CD4-positive, alpha-beta memory T cell (primary cell): ENCODE measurements at regions of chr1 and their contacts with region 1.

Region 1: GRCh38 chr1:1574721-1575537 is at the start of gene SSU72:
- DNase-seq: peak; percentile 91 to 95 (median 94)
- H3K4me3 ChIP-seq: peak within 1 kb of the TSS; percentile 97
- H3K4me3 Mint-ChIP-seq: peak within 1 kb of the TSS; percentile 96 to 99 (median 98)
- H3K27ac ChIP-seq: peak within 1 kb of the TSS; percentile 99
- H3K27ac Mint-ChIP-seq: peak within 1 kb of the TSS; percentile 97 to 100 (median 99)
- H3K4me1 ChIP-seq: peaks cover 43% of the 10 kb centered on the region
- H3K4me1 Mint-ChIP-seq: peaks cover 12 to 38% (median 25%) of the 10 kb centered on the region in 4 donors
- H3K27me3 ChIP-seq: no peaks in the 10 kb centered on the region
- H3K27me3 Mint-ChIP-seq: no peaks in the 10 kb centered on the region
- total RNA-seq, gene SSU72: 128 to 132 TPM

Region 2: GRCh38 chr1:993379-993995 is 581.4 kb before region 1 on chr1:
- CTCF ChIA-PET with region 1: no interaction called
- POLR2A ChIA-PET with region 1: no interaction called
- intact Hi-C with region 1: no loop called
- DNase-seq: no peak
- H3K4me3 ChIP-seq: no peak overlapping the region
- H3K4me3 Mint-ChIP-seq: no peak overlapping the region
- H3K27ac ChIP-seq: no peak overlapping the region
- H3K27ac Mint-ChIP-seq: no peak overlapping the region
- H3K4me1 ChIP-seq: peaks cover 4% of the 10 kb centered on the region
- H3K4me1 Mint-ChIP-seq: peaks cover 4 to 15% (median 5%) of the 10 kb centered on the region in 4 donors
- H3K27me3 ChIP-seq: peaks cover 14% of the 10 kb centered on the region
- H3K27me3 Mint-ChIP-seq: peaks cover 21 to 25% of the 10 kb centered on the region in 2 donors

Region 3: DNA sequence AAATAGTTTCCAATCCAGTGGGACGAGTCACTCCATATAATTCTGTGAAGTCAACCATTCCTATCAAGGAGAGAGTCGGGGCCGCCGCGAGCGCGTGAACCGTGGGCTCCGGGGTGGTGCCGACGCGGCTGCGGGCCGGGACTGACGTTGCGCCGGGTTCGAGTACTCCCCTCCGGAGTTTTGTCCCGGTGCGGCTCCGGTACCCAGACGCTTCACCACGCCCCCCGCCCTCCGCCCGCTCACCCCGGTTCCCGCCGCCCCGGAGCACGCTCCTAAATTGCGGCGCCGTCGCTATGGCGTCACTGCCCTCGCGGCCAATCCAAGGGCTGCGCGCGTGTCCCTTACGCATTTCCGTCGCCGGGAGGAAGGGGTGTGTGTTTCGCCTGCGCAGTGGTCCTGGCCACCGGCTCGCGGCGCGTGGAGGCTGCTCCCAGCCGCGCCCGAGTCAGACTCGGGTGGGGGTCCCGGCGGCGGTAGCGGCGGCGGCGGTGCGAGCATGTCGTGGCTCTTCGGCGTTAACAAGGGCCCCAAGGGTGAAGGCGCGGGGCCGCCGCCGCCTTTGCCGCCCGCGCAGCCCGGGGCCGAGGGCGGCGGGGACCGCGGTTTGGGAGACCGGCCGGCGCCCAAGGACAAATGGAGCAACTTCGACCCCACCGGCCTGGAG is 103.4 kb before region 1 on chr1 and contains the start of gene ATAD3B:
- CTCF ChIA-PET with region 1: no interaction called
- POLR2A ChIA-PET with region 1: no interaction called
- intact Hi-C with region 1: loop called (anchors 1 kb)
- DNase-seq: peak; percentile 87 to 92 (median 87)
- H3K4me3 ChIP-seq: peak within 1 kb of the TSS; percentile 54 to 83
- H3K4me3 Mint-ChIP-seq: peak within 1 kb of the TSS; percentile 84 to 97 (median 91)
- H3K27ac ChIP-seq: peak within 1 kb of the TSS; percentile 56
- H3K27ac Mint-ChIP-seq: peak within 1 kb of the TSS; percentile 77 to 99 (median 93)
- H3K4me1 ChIP-seq: peaks cover 24% of the 10 kb centered on the region
- H3K4me1 Mint-ChIP-seq: peaks cover 8 to 38% (median 19%) of the 10 kb centered on the region in 4 donors
- H3K27me3 ChIP-seq: no peaks in the 10 kb centered on the region
- H3K27me3 Mint-ChIP-seq: no peaks in the 10 kb centered on the region
- total RNA-seq, gene ATAD3B: 51.1 to 53.8 TPM

Region 4: DNA sequence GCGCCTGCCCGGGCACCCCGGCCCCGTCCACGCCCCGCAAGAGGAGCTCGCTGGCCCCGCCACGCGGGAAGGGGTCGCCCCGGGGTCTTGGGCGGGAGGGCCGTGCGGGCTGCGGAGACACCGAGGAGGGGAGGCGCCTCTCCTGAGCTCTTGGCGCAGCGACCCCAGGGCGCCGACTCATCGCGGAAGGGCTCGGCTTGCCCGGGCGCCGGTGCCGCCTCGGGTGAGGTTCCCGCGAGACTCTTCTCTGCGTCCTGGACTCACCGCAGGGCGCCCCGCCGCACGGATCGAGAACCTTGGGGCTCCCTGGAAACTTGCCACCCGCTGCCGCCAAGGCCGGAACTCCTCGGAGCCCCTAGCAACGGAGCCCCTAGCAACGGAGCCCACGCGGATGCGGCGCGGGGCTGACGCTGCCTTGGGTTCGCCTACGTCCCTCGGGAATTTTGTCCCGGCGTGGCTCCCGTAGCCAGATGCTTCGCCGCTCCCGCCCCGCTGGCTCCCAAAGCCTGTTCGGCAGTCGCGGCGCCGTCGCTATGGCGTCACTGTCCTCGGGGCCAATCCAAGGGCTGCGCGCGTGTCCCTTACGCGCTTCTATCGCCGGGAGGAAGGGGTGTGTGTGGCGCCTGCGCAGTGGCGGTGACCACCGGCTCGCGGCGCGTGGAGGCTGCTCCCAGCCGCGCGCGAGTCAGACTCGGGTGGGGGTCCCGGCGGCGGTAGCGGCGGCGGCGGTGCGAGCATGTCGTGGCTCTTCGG is 63.2 kb before region 1 on chr1 and contains the start of gene ATAD3A:
- CTCF ChIA-PET with region 1: no interaction called
- POLR2A ChIA-PET with region 1: no interaction called
- intact Hi-C with region 1: loop called (anchors 2 kb)
- DNase-seq: peak; percentile 94 to 95 (median 94)
- H3K4me3 ChIP-seq: peak within 1 kb of the TSS; percentile 73 to 91
- H3K4me3 Mint-ChIP-seq: peak within 1 kb of the TSS; percentile 90 to 96 (median 93)
- H3K27ac ChIP-seq: peak within 1 kb of the TSS; percentile 94
- H3K27ac Mint-ChIP-seq: peak within 1 kb of the TSS; percentile 91 to 98 (median 96)
- H3K4me1 ChIP-seq: peaks cover 6% of the 10 kb centered on the region
- H3K4me1 Mint-ChIP-seq: peaks cover 5 to 19% (median 11%) of the 10 kb centered on the region in 4 donors
- H3K27me3 ChIP-seq: no peaks in the 10 kb centered on the region
- H3K27me3 Mint-ChIP-seq: no peaks in the 10 kb centered on the region
- total RNA-seq, gene ATAD3A: 23.0 to 24.7 TPM

Region 5: DNA sequence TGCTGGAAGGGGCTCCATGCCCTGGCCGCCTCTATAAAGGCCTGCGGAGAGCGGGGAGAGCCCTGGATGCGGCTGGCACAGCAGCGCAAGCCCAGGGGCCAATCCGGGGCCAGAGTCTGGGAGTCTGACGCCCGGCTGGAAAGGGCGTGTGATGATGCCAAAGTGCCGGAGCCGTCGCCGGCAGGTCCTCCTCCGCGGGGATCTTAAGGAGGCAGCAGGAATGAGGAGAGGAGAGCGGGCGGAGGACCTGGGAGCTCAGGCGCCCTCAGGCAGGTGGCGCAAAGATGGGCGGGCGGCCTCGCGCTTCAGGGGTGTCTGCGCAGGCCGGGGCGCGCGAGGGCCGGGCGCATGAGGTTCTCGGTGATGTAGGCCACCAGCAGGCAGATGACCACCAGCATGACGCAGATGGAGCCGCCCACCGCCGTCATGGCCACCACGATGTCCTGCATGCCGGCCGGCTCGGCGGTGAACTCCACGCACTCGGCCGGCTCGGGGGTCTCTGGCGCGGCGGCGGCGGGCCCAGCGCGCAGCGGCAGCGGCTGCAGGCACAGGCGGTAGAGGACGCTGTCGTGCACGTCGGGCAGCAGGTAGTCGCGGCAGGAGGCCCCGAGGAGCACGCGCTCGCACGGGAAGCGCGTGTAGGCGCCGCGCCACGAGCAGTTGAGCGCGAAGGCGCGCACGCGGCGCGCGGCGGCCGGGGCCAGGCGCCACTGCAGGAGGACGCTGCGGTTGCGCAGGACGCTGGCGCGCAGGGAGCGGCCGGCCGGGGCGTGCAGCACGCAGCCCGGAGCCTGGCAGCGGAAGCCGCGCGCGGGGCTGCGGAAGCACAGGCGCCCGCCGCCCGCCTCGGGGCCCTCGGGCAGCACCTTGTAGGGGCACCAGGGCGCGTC is 24.3 kb after region 1 on chr1:
- CTCF ChIA-PET with region 1: no interaction called
- POLR2A ChIA-PET with region 1: no interaction called
- intact Hi-C with region 1: loop called (anchors 2 kb)
- DNase-seq: peak in 4 of 5 donors; percentile 41 to 53 (median 50)
- H3K4me3 ChIP-seq: no peak overlapping the region
- H3K4me3 Mint-ChIP-seq: peak overlapping the region; percentile 69 to 85 (median 76)
- H3K27ac ChIP-seq: no peak overlapping the region
- H3K27ac Mint-ChIP-seq: peak overlapping the region in 2 of 7 donors; percentile 46 to 59
- H3K4me1 ChIP-seq: peaks cover 9% of the 10 kb centered on the region
- H3K4me1 Mint-ChIP-seq: peaks cover 0 to 16% (median 1%) of the 10 kb centered on the region in 4 donors
- H3K27me3 ChIP-seq: no peaks in the 10 kb centered on the region
- H3K27me3 Mint-ChIP-seq: peaks cover 0 to 4% of the 10 kb centered on the region in 2 donors

Region 6: DNA sequence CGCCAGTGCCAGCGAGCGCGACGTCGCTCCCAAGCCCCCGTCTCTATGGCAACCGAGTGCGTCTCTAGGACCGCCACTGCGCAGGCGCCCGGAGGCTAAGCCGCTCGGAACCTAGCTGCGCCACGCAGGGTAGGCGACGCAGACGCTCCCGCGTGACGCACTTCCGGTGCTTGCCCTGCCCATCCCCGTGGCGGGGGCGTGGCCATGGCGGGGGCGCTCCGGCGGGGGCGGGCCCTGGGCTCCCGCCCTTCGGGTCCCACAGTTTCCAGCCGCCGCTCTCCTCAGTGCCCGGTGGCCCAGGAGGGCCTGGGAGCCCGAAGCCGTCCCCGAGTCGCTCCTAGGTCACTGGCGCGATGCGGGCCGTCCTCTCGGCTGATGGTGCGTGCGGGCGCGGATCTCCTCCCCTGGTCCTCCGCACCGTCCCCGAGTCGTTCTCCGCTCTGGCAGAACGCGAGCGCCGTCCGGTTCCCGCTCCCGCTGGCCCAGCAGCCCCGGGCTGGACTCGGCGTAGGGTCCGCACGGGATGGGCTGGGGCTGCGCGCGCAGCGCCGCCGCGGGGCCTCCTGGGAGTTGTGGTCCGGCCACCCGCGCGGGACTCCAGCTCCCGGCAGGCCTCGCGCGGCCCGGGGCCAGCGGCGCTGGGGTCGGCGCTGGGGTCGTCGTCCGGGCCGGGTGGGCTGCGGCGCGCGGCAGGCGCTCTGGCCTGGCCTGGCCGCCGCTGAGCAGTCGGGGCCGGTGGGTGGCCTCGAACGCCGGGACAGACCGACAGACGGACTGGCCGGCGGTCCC is 40.5 kb after region 1 on chr1 and contains the start of gene MIB2:
- CTCF ChIA-PET with region 1: no interaction called
- POLR2A ChIA-PET with region 1: interaction called, 61 read pairs
- intact Hi-C with region 1: loop called (anchors 1 kb)
- DNase-seq: peak; percentile 98 to 99 (median 99)
- H3K4me3 ChIP-seq: peak within 1 kb of the TSS; percentile 73 to 89
- H3K4me3 Mint-ChIP-seq: peak within 1 kb of the TSS; percentile 89 to 97 (median 94)
- H3K27ac ChIP-seq: peak within 1 kb of the TSS; percentile 100
- H3K27ac Mint-ChIP-seq: peak within 1 kb of the TSS; percentile 98 to 100 (median 99)
- H3K4me1 ChIP-seq: peaks cover 29% of the 10 kb centered on the region
- H3K4me1 Mint-ChIP-seq: peaks cover 10 to 38% (median 26%) of the 10 kb centered on the region in 4 donors
- H3K27me3 ChIP-seq: no peaks in the 10 kb centered on the region
- H3K27me3 Mint-ChIP-seq: no peaks in the 10 kb centered on the region
- total RNA-seq, gene MIB2: 112 to 114 TPM

Region 7: GRCh38 chr1:1630271-1630964 is 55.5 kb after region 1 on chr1:
- CTCF ChIA-PET with region 1: interaction called, 4 read pairs
- POLR2A ChIA-PET with region 1: interaction called, 4 read pairs
- intact Hi-C with region 1: loop called (anchors 2 kb)
- DNase-seq: peak; percentile 96 to 98 (median 97)
- H3K4me3 ChIP-seq: peak overlapping the region in 1 of 2 donors; percentile 48
- H3K4me3 Mint-ChIP-seq: peak overlapping the region; percentile 66 to 95 (median 91)
- H3K27ac ChIP-seq: peak overlapping the region; percentile 38
- H3K27ac Mint-ChIP-seq: peak overlapping the region; percentile 93 to 97 (median 96)
- H3K4me1 ChIP-seq: peaks cover 19% of the 10 kb centered on the region
- H3K4me1 Mint-ChIP-seq: peaks cover 3 to 9% (median 6%) of the 10 kb centered on the region in 4 donors
- H3K27me3 ChIP-seq: no peaks in the 10 kb centered on the region
- H3K27me3 Mint-ChIP-seq: peaks cover 2 to 4% of the 10 kb centered on the region in 2 donors